ENCODE measurements at regions of chr20 and their contacts with region 1.

Region 1: GRCh38 chr20:11867291-11867921 is 50.3 kb upstream of the BTBD3 start:
- DNase-seq: no peak
- ATAC-seq: no peak
- H3K4me3 ChIP-seq: no peak overlapping the region
- H3K27ac ChIP-seq: no peak overlapping the region
- H3K4me1 ChIP-seq: no peaks in the 10 kb centered on the region
- H3K27me3 ChIP-seq: peaks cover 4% of the 10 kb centered on the region; the same call in 1 of the 2 replicates
- CTCF ChIP-seq: no peak
- POLR2A ChIP-seq: no peak
- RAD21 ChIP-seq: no peak

Region 2: DNA sequence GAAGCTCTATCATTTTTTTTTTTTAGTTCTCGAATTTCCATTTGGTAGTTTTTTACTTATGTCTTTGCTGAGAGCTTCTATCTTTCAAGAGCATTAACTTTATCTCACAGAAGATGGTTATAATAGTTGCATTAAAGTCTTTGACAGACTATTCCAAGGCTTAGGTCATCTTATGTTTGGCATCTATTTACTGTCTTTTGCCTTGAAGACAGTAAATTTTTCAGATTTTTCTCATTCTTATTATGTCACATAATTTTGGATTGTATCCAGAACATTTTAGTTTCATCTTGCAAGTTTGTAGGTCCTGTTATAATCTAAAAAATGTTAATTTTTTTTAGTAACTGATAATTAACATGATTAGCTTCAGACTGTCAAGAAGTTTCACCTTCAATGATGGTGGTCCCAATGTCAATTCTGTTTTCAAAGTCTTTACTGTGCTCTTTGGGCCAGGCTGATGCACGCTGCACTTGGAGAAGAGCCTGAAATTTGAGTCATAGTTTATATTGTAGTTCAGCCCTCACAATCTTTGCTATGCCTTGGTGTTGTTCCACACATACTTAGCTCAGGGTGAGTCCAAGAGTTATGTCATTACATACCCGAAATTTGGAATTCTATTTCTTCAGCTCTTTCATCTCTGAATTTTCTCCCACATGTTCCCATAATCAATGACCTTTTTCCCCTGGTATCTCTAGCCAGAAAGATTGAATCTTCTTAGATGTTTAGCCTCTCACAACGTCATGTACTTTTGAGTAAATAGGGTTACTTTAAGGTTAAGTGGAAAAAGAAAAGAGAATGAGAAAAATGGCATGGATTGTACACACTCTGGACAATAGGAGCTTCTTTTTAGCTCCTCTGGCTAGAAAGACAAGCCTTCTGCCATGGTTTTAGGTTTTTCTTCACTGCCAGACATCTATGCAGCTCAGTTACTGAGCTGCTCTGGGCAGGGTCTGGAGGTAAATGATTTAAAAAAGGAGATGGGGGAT is 60.0 kb before region 1 on chr20:
- CTCF ChIA-PET with region 1: no interaction called
- POLR2A ChIA-PET with region 1: no interaction called
- RAD21 ChIA-PET with region 1: no interaction called
- intact Hi-C with region 1: no loop called
- DNase-seq: no peak
- ATAC-seq: no peak
- H3K4me3 ChIP-seq: no peak overlapping the region
- H3K27ac ChIP-seq: no peak overlapping the region
- H3K4me1 ChIP-seq: no peaks in the 10 kb centered on the region
- H3K27me3 ChIP-seq: peaks cover 3% of the 10 kb centered on the region
- CTCF ChIP-seq: no peak
- POLR2A ChIP-seq: no peak
- RAD21 ChIP-seq: no peak

Region 3: GRCh38 chr20:11890331-11891080 is 23.1 kb after region 1 on chr20:
- CTCF ChIA-PET with region 1: no interaction called
- POLR2A ChIA-PET with region 1: no interaction called
- RAD21 ChIA-PET with region 1: interaction called in 1 of 2 experiments, 4 read pairs
- intact Hi-C with region 1: loop called (anchors 2 kb)
- DNase-seq: peak; percentile 78
- ATAC-seq: peak; percentile 90
- H3K4me3 ChIP-seq: peak overlapping the region; percentile 66 to 71
- H3K27ac ChIP-seq: peak overlapping the region; percentile 85
- H3K4me1 ChIP-seq: peaks cover 7 to 16% of the 10 kb centered on the region in 2 experiments; a peak in 3 of 4 replicates
- H3K27me3 ChIP-seq: 0 out of 2 replicates have a peak, but pooled peaks cover 7% of the 10 kb centered on the region
- CTCF ChIP-seq: no peak
- POLR2A ChIP-seq: peak; percentile 59
- RAD21 ChIP-seq: no peak

Region 4: DNA sequence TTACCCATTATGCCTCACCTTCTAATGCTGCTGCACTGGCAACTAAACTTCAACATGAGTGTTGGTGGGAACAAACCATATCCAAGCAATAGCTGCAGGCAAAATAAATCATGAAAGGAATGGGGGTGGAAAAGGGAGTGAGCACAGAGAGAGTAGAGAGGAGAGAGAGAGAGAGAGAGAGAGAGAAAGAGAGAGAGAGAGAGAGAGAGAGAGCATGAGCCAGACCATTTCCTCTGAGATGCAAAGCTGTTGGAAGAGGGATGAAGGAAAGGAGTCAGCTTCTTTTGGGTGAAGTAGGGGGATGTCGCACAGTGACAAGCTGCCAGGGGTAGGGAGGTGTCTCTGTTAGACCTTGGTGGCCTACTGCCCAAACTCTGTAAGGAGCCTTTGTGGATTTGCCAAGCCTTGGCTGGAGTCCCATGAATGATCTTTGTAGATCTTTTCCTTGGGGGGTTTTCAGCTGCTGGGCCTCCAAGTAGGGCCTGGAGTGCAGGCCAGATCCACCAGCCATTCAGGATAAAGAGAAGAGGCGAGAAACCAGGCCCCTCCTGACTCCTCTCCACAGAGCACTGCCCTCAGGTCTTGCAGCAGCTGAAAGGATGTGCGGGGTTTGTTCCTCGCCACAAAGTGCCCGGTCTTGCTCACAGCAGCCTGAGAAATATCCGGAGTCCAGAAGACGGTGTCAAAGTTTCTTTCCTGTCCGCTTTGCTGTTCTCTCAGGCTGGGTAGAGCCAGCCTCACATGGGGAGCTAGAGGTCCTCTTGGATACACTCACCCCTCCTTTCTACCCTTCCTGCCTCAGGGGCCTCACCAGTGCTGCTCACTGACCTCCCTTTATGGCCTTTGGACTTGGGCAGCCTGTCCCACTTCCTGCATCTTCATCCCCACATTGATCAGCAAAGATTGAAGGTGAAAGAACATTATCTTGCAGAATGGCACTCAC is 68.1 kb after region 1 on chr20:
- CTCF ChIA-PET with region 1: no interaction called
- POLR2A ChIA-PET with region 1: no interaction called
- RAD21 ChIA-PET with region 1: no interaction called
- intact Hi-C with region 1: no loop called
- DNase-seq: no peak
- ATAC-seq: no peak
- H3K4me3 ChIP-seq: no peak overlapping the region
- H3K27ac ChIP-seq: no peak overlapping the region
- H3K4me1 ChIP-seq: no peaks in the 10 kb centered on the region
- H3K27me3 ChIP-seq: no peaks in the 10 kb centered on the region
- CTCF ChIP-seq: no peak
- POLR2A ChIP-seq: no peak
- RAD21 ChIP-seq: no peak

Region 5: GRCh38 chr20:12023194-12023795 is 155.9 kb after region 1 on chr20:
- CTCF ChIA-PET with region 1: no interaction called
- POLR2A ChIA-PET with region 1: no interaction called
- RAD21 ChIA-PET with region 1: no interaction called
- intact Hi-C with region 1: no loop called
- DNase-seq: no peak
- ATAC-seq: no peak
- H3K4me3 ChIP-seq: no peak overlapping the region
- H3K27ac ChIP-seq: no peak overlapping the region
- H3K4me1 ChIP-seq: no peaks in the 10 kb centered on the region
- H3K27me3 ChIP-seq: no peaks in the 10 kb centered on the region
- CTCF ChIP-seq: no peak
- POLR2A ChIP-seq: no peak
- RAD21 ChIP-seq: no peak

Region 6: DNA sequence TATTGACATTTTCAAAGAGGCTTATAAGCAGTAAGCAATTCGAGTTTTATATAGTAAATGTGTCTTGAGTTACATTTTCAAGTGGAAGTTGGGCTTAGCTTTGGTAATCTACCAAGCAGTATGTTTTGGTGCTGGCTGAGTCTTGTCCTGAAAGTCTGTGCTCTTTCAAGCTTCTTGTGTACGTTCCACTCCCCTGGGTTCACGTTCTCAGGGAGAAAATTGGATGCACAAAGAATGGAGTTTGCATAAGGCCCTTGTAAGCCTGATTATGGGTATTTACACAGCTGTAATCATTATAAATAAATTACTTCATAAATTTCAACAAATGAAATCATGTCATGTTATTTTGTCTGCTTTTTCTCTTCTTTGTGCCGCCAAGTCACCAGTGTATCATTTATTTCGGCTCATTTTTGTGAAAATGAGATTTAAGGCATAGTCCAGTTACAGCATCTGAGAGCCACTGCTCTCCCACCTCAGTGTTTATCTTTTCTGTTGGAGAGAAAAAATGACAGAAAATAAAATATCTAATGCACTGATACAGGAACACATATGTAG is 312.8 kb after region 1 on chr20:
- CTCF ChIA-PET with region 1: no interaction called
- POLR2A ChIA-PET with region 1: no interaction called
- RAD21 ChIA-PET with region 1: no interaction called
- intact Hi-C with region 1: no loop called
- DNase-seq: no peak
- ATAC-seq: no peak
- H3K4me3 ChIP-seq: no peak overlapping the region
- H3K27ac ChIP-seq: no peak overlapping the region
- H3K4me1 ChIP-seq: no peaks in the 10 kb centered on the region
- H3K27me3 ChIP-seq: no peaks in the 10 kb centered on the region
- CTCF ChIP-seq: no peak
- POLR2A ChIP-seq: no peak
- RAD21 ChIP-seq: no peak

Measured in HCT116 (cell line).